Activated T-helper 2 cell treated with anti-CD3 and anti-CD28 coated beads, Interferon-gamma antibody, Interleukin-2, Interleukin-4, amounts not matched to agents 10 μg/mL and 5 μg/mL and 100 μg/mL, durations not matched to agents 14 hours and 24 hours and 36 hours (primary cell): ENCODE measurements at regions of chr2 and their contacts with region 1.

Region 1: GRCh38 chr2:9656270-9656766 is 25.5 kb upstream of the YWHAQ start:
- DNase-seq: peak; percentile 74
- H3K4me3 Mint-ChIP-seq: peak overlapping the region; percentile 4
- H3K27ac Mint-ChIP-seq: peak overlapping the region; percentile 91
- H3K4me1 Mint-ChIP-seq: peaks cover 49% of the 10 kb centered on the region
- H3K27me3 Mint-ChIP-seq: no peaks in the 10 kb centered on the region

Region 2: GRCh38 chr2:9594366-9595054 is 61.8 kb before region 1 on chr2:
- intact Hi-C with region 1: loop called (anchors 1 kb)
- DNase-seq: no peak
- H3K4me3 Mint-ChIP-seq: peak overlapping the region; percentile 42
- H3K27ac Mint-ChIP-seq: peak overlapping the region; percentile 93
- H3K4me1 Mint-ChIP-seq: peaks cover 57% of the 10 kb centered on the region
- H3K27me3 Mint-ChIP-seq: no peaks in the 10 kb centered on the region

Region 3: GRCh38 chr2:9630749-9631483 is 25.4 kb before region 1 on chr2 and contains the start of gene YWHAQ:
- intact Hi-C with region 1: loop called (anchors 1 kb)
- DNase-seq: peak; percentile 96
- H3K4me3 Mint-ChIP-seq: peak within 1 kb of the TSS; percentile 99
- H3K27ac Mint-ChIP-seq: peak within 1 kb of the TSS; percentile 96
- H3K4me1 Mint-ChIP-seq: peaks cover 40% of the 10 kb centered on the region
- H3K27me3 Mint-ChIP-seq: no peaks in the 10 kb centered on the region
- total RNA-seq, gene YWHAQ: 334 and 339 TPM in 2 replicates

Region 4: DNA sequence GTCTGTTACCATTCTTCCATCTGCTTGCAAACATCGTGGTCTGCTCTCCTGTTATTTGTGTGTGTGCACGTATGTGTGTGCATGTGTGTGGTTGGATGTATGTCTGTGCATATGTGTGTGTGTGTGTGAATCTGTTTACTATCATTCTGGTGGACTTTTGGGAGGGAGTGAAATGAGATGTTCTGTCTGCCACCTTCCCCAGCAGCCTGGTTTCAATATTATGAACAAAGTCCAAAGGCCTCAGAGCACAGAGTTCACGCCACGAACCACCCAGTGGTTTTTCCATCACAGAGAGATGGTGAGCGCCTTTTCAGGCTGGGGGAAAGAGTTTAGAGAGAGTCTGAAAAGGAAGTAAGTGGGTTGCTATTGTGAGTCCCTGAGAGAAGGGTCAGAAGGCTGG is 41.6 kb after region 1 on chr2:
- intact Hi-C with region 1: loop called (anchors 1 kb)
- DNase-seq: no peak
- H3K4me3 Mint-ChIP-seq: no peak overlapping the region
- H3K27ac Mint-ChIP-seq: peak overlapping the region; percentile 33
- H3K4me1 Mint-ChIP-seq: peaks cover 36% of the 10 kb centered on the region
- H3K27me3 Mint-ChIP-seq: no peaks in the 10 kb centered on the region

Region 5: GRCh38 chr2:9708683-9709538 is 52.6 kb after region 1 on chr2:
- intact Hi-C with region 1: loop called (anchors 1 kb)
- DNase-seq: peak; percentile 26
- H3K4me3 Mint-ChIP-seq: peak overlapping the region; percentile 17
- H3K27ac Mint-ChIP-seq: peak overlapping the region; percentile 98
- H3K4me1 Mint-ChIP-seq: peaks cover 57% of the 10 kb centered on the region
- H3K27me3 Mint-ChIP-seq: no peaks in the 10 kb centered on the region

Region 6: GRCh38 chr2:9782197-9782719 is 125.9 kb after region 1 on chr2:
- intact Hi-C with region 1: loop called (anchors 1 kb)
- DNase-seq: peak; percentile 82
- H3K4me3 Mint-ChIP-seq: peak overlapping the region; percentile 66
- H3K27ac Mint-ChIP-seq: peak overlapping the region; percentile 99
- H3K4me1 Mint-ChIP-seq: peaks cover 67% of the 10 kb centered on the region
- H3K27me3 Mint-ChIP-seq: no peaks in the 10 kb centered on the region

Region 7: DNA sequence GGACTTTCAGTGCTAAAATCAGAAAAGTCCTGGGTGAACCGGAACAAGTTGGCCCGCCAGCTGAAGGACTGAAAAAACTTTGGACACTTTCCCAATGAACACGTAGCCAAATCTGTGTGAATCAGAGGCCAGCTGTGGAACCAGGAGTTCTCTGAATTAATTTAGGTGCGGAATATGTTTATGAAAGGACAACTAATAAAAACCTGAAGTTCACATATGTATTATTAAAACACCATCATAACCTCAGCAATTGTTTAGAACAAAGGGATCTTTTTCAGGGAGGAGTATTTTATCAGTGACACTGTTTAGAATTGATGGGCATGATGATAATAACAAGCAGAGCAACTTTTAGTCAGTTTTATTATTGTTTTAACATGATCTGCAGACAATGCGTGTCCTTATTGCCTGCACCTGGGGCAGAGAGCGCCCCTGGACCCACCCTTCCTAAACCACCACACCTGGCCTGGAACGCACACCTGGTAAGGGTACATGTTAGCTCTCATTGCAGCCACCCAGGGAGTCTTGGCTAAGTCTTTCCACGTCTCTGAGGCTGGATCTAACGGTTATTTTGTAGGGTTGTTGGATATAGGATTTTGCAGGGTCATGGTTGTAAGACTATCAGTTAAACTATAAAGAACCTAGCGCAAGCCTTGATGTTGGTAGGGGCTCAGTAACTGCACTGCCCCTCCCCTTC is 801.7 kb after region 1 on chr2:
- intact Hi-C with region 1: no loop called
- DNase-seq: no peak
- H3K4me3 Mint-ChIP-seq: no peak overlapping the region
- H3K27ac Mint-ChIP-seq: no peak overlapping the region
- H3K4me1 Mint-ChIP-seq: peaks cover 3% of the 10 kb centered on the region
- H3K27me3 Mint-ChIP-seq: peaks cover 18% of the 10 kb centered on the region

Region 8: GRCh38 chr2:11286749-11287148 is 1630.4 kb after region 1 on chr2:
- intact Hi-C with region 1: no loop called
- DNase-seq: no peak
- H3K4me3 Mint-ChIP-seq: no peak overlapping the region
- H3K27ac Mint-ChIP-seq: no peak overlapping the region
- H3K4me1 Mint-ChIP-seq: no peaks in the 10 kb centered on the region
- H3K27me3 Mint-ChIP-seq: no peaks in the 10 kb centered on the region